IMR-90 (cell line): ENCODE measurements at regions of chr9 and their contacts with region 1.

Region 1: GRCh38 chr9:121399883-121400607 is 30.0 kb upstream of the STOM start:
- DNase-seq: peak; percentile 86
- ATAC-seq: peak; percentile 27
- H3K4me3 ChIP-seq: no peak overlapping the region
- H3K27ac ChIP-seq: no peak overlapping the region
- H3K4me1 ChIP-seq: peaks cover 11% of the 10 kb centered on the region
- H3K27me3 ChIP-seq: no peaks in the 10 kb centered on the region
- CTCF ChIP-seq: peak; percentile 81
- POLR2A ChIP-seq: no peak
- RAD21 ChIP-seq: peak; percentile 84

Region 2: GRCh38 chr9:120998111-120998510 is 401.9 kb before region 1 on chr9:
- CTCF ChIA-PET with region 1: no interaction called
- POLR2A ChIA-PET with region 1: no interaction called
- dilution Hi-C with region 1: no loop called
- in situ Hi-C with region 1: loop called (anchors 25 kb)
- intact Hi-C with region 1: loop called (anchors 10 kb)
- DNase-seq: no peak
- ATAC-seq: no peak
- H3K4me3 ChIP-seq: no peak overlapping the region
- H3K27ac ChIP-seq: no peak overlapping the region
- H3K4me1 ChIP-seq: no peaks in the 10 kb centered on the region
- H3K27me3 ChIP-seq: no peaks in the 10 kb centered on the region
- CTCF ChIP-seq: no peak
- POLR2A ChIP-seq: no peak
- RAD21 ChIP-seq: no peak

Region 3: GRCh38 chr9:121350993-121351561 is 49.0 kb before region 1 on chr9:
- CTCF ChIA-PET with region 1: interaction called, 3 read pairs
- POLR2A ChIA-PET with region 1: no interaction called
- dilution Hi-C with region 1: no loop called
- in situ Hi-C with region 1: no loop called
- intact Hi-C with region 1: loop called (anchors 2 kb)
- DNase-seq: peak; percentile 92
- ATAC-seq: peak; percentile 69
- H3K4me3 ChIP-seq: no peak overlapping the region
- H3K27ac ChIP-seq: peak overlapping the region; percentile 73
- H3K4me1 ChIP-seq: peaks cover 28% of the 10 kb centered on the region
- H3K27me3 ChIP-seq: no peaks in the 10 kb centered on the region
- CTCF ChIP-seq: no peak
- POLR2A ChIP-seq: no peak
- RAD21 ChIP-seq: no peak; the same call in 1 of the 2 replicates